ENCODE measurements at regions of chr6 and their contacts with region 1.

Region 1: GRCh38 chr6:70667711-70668498 is at the start of gene SMAP1:
- DNase-seq: peak; percentile 91
- H3K4me3 Mint-ChIP-seq: peak within 1 kb of the TSS; percentile 90
- H3K27ac Mint-ChIP-seq: peak within 1 kb of the TSS; percentile 92
- H3K4me1 Mint-ChIP-seq: peaks cover 59% of the 10 kb centered on the region
- H3K27me3 Mint-ChIP-seq: no peaks in the 10 kb centered on the region
- total RNA-seq, gene SMAP1: 24.3 and 26.3 TPM in 2 replicates

Region 2: DNA sequence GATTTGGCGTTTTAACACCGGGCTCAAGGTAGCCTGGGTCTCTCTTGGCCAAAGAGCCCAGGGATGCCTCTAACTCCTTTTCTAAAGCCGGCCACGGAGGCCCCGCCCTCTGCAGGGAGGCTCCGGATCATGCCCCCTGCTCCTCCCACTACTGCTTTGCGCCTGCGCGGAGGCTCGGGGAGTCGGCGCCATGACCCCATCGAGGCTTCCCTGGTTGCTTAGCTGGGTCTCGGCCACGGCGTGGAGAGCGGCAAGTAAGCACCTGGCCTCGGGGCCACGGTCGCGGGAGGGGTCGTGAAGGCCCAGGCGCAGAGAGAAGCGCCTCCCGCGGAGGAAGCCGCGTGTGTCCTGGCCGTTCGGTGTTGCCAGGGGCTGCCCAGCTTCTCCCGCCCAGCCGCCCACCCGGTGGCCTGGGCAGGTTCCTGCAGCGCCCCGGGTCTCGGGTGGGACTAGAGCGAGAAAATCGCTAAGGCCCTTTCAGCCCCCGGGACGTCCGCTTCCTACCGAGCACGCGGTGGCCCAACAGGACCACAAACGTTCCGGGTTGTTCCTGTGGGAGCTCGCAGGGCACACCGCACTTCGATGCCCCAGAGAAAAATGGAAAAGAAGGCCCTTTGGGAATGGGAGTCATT is 101.0 kb before region 1 on chr6 and contains the start of gene SDHAF4:
- intact Hi-C with region 1: loop called (anchors 1 kb)
- DNase-seq: peak; percentile 92
- H3K4me3 Mint-ChIP-seq: peak within 1 kb of the TSS; percentile 88
- H3K27ac Mint-ChIP-seq: peak within 1 kb of the TSS; percentile 81
- H3K4me1 Mint-ChIP-seq: peaks cover 31% of the 10 kb centered on the region
- H3K27me3 Mint-ChIP-seq: no peaks in the 10 kb centered on the region
- total RNA-seq, gene SDHAF4: 10.6 and 11.8 TPM in 2 replicates

Measured in activated T-helper 1 cell treated with anti-CD3 and anti-CD28 coated beads, Interleukin-12 subunit alpha, Interleukin-12 subunit beta, Interleukin-2, Interleukin-4 antibody, amounts not matched to agents 30 ng/mL and 10 ng/mL and 1 ng/mL, durations not matched to agents 14 hours and 24 hours and 36 hours (primary cell).